HEK293T (cell line): ENCODE measurements at regions of chr1 and their contacts with region 1.

Region 1: GRCh38 chr1:70221241-70222121 is at the start of gene SRSF11:
- DNase-seq: peak; percentile 98

Region 2: DNA sequence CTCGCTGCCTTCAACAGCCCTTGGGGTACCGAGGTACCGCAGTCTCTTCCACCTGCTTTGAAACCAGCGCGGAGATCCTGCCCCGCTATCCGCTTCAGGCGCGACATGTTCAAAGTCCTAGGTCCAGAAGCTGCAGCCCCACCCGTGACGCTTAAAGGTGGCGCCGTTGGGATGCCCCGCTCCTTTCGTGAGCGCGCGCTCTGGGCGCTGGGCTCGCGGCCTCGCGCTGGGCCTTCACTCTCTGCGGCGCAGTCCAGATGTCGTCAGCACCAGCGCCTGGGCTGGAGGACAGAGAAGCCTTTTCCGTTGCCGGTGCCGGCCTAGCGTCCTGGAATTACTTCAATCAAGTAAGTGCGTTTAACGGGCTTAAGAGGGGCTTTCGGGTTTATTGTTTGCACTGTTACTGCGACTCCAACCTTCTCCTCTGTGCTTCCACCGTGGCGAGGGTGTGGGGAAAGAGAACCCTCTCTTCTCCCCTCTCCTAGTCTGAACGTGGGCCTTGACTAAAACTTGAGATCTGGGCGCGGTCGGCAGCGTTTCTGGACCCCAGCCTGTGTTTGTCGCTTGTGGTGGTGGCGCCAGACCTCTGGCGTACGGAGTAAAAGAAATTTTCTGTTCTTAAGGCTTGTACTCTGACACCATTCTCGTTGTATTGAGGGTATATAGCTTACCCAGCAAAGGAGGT is 15.9 kb before region 1 on chr1 and contains the start of gene LRRC40:
- CTCF ChIA-PET with region 1: interaction called, 9 read pairs
- POLR2A ChIA-PET with region 1: interaction called, 30 read pairs
- DNase-seq: peak; percentile 98

Region 3: DNA sequence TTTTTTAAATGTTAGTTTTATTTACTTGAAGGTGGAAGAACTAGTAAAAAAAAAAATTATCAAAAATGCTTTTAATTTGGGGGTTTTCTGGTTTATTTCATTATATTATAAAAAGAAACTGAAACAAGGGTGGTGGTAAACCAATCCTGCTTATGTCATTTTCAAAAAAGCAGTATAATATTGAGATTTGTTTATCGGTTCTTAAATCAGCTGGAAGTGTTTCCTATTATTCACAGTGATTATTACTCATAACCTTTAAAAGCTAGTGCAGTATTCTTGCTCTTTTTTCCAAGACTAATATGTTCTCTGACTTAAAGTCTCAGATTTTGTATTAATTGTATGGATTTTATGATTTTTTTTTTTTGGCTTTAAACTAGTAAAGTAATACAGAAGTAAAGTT is 10.7 kb before region 1 on chr1:
- CTCF ChIA-PET with region 1: interaction called, 9 read pairs
- POLR2A ChIA-PET with region 1: interaction called, 30 read pairs
- DNase-seq: no peak

Region 4: DNA sequence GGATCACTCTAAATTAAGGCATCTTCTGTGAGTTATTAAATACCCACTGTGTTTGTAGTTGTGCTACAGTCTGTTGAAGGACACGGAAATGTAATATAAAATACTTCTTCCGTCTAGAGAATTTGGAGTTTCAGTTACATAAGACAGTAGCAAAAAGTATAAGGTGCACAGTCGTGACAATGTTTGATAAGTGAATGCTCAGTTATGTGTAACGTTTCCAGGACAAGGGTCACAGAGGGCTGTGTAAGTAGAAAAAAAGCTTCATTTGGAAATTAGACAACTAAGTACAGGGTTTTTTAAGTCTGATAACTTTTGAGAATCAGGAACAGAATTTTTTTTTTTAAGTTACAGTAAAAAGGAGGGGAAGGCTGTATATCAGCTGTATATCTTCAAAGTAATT is 27.2 kb after region 1 on chr1:
- CTCF ChIA-PET with region 1: no interaction called
- POLR2A ChIA-PET with region 1: no interaction called
- DNase-seq: no peak

Region 5: GRCh38 chr1:70333203-70333602 is 111.7 kb after region 1 on chr1:
- CTCF ChIA-PET with region 1: no interaction called
- POLR2A ChIA-PET with region 1: no interaction called
- DNase-seq: no peak